Activated CD4-positive, alpha-beta memory T cell treated with anti-CD3 and anti-CD28 coated beads for 36 hours (primary cell): ENCODE measurements at regions of chr10 and their contacts with region 1.

Region 1: GRCh38 chr10:70758757-70759514 is 26.2 kb downstream of the TBATA start:
- DNase-seq: peak; percentile 76
- H3K4me3 Mint-ChIP-seq: no peak overlapping the region
- H3K27ac Mint-ChIP-seq: no peak overlapping the region
- H3K4me1 Mint-ChIP-seq: peaks cover 7% of the 10 kb centered on the region
- H3K27me3 Mint-ChIP-seq: peaks cover 2% of the 10 kb centered on the region

Region 2: DNA sequence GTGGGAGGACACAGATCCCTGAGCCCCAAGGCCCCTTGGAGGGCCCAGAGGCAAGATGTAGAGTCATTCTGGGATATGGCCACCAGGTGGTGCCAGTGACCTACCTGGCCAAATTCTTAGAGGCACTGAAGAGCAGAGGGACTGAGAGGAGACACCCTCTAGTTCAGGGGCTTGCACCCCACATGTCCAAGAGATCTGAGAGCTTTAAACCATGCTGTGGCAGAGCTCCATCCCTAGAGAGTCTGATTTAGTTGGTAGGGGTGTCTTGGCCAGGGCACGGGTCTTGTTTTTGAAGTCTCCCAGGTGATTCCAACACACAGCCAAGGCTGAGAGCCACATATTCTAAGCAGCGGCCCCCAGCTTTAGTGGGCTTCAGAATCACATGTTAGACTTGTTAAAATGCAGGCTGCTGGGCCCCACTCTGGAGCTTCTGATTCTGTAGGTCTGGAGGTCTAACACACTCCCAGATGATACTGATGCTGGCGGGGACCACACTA is 208.9 kb before region 1 on chr10:
- CTCF ChIA-PET with region 1: interaction called, 85 read pairs
- POLR2A ChIA-PET with region 1: no interaction called
- intact Hi-C with region 1: loop called (anchors 1 kb)
- DNase-seq: peak; percentile 82
- H3K4me3 Mint-ChIP-seq: no peak overlapping the region
- H3K27ac Mint-ChIP-seq: no peak overlapping the region
- H3K4me1 Mint-ChIP-seq: no peaks in the 10 kb centered on the region
- H3K27me3 Mint-ChIP-seq: no peaks in the 10 kb centered on the region

Region 3: DNA sequence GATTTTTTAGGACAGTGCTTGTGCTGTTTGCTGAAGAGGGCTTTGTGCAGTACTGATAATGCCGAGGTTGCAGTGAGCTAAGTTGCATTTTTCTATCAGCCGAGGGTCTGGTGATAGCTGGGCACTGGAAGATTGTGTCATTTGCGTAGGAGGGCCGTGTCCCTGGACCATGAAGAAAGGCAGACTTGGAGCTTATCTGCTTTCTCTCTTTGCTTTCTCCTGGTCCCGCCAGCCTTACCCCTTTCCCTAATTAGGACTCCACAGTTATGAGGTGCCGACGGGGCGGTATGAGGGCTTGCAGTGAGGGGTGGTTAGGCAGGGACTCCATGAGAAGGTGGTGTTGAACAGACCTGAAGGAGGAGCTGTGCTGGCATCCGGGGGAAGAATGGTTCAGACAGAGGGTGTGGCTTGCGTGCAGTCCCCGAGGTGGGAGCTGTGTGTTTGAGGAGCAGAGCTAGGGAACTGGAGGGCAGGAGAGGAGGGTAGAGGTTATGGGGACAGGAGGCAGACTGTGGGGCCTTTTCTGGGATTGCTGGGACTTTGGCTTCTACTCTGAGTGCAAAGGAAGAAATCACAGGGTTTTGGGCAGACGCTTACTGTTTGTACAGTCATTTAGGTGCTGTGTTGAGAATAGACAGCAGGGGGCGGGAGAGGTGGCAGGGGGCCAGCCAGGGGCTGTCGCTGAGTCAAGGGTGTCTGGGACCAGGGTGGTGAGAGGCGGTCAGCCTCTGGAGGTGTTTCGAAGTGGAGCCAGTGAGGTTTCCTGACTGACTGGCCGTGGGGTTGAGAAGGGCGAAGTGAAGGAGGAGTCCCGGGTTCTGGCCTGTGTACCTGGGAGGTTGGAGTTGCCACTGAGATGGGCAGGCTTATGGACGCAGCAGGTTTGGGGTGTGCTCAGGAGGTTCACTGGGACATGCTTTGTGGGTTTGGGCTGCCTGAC is 199.8 kb before region 1 on chr10:
- CTCF ChIA-PET with region 1: interaction called, 40 read pairs
- POLR2A ChIA-PET with region 1: no interaction called
- intact Hi-C with region 1: loop called (anchors 1 kb)
- DNase-seq: peak; percentile 83
- H3K4me3 Mint-ChIP-seq: peak overlapping the region; percentile 64
- H3K27ac Mint-ChIP-seq: peak overlapping the region; percentile 5
- H3K4me1 Mint-ChIP-seq: peaks cover 11% of the 10 kb centered on the region
- H3K27me3 Mint-ChIP-seq: no peaks in the 10 kb centered on the region

Region 4: DNA sequence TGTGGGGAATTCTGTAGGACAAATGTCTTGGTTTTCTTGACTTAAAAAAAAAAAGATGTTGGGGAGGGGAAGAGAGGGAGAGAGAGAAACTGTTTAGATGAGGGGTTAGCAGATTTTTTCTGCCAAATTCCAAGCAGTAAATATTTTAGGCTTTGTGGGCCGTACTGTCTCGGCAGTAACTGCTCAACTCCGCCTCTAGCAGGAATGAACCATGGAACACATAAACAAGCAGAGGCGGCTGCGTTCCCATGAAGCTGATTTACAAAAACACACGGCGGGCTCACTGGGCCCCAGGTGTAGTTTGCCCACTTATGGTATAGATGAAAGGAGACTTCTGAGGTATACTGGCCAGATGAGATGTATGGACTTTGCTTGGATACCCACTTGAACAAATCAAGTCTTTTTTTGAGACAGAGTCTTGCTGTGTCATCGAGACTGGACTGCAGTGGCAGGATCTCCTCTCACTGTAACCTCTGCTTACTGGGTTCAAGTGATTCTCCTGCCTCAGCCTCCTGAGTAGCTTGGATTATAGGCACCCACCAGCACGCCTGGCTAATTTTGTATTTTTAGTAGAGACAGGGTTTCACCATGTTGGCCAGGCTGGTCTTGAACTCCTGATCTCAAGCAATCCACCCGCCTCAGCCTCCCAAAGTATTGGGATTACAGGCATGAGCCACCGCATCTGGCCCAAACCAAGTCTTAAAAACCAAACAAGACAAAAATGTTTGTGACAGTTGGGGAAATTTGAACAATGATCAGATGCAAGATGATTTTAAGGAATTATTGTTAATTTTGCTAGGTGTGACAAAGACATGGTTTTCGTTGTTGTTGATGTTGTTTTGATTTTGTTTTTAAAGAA is 96.3 kb before region 1 on chr10:
- CTCF ChIA-PET with region 1: no interaction called
- POLR2A ChIA-PET with region 1: no interaction called
- intact Hi-C with region 1: no loop called
- DNase-seq: no peak
- H3K4me3 Mint-ChIP-seq: no peak overlapping the region
- H3K27ac Mint-ChIP-seq: no peak overlapping the region
- H3K4me1 Mint-ChIP-seq: no peaks in the 10 kb centered on the region
- H3K27me3 Mint-ChIP-seq: peaks cover 15% of the 10 kb centered on the region

Region 5: GRCh38 chr10:71383972-71384687 is 625.2 kb after region 1 on chr10:
- CTCF ChIA-PET with region 1: no interaction called
- POLR2A ChIA-PET with region 1: no interaction called
- intact Hi-C with region 1: no loop called
- DNase-seq: peak; percentile 81
- H3K4me3 Mint-ChIP-seq: no peak overlapping the region
- H3K27ac Mint-ChIP-seq: no peak overlapping the region
- H3K4me1 Mint-ChIP-seq: no peaks in the 10 kb centered on the region
- H3K27me3 Mint-ChIP-seq: peaks cover 1% of the 10 kb centered on the region